HepG2 (cell line): ENCODE measurements at regions of chr17 and their contacts with region 1.

Region 1: GRCh38 chr17:42536048-42536371 is at the start of gene NAGLU:
- DNase-seq: peak; percentile 89
- ATAC-seq: peak; percentile 74
- H3K4me3 ChIP-seq: peak within 1 kb of the TSS; percentile 54 to 72 (median 66)
- H3K27ac ChIP-seq: peak within 1 kb of the TSS; percentile 79
- H3K4me1 ChIP-seq: peaks cover 62% of the 10 kb centered on the region
- H3K27me3 ChIP-seq: no peaks in the 10 kb centered on the region
- CTCF ChIP-seq: no peak
- EP300 ChIP-seq: peak in 1 of 2 experiments; percentile 32; a peak in 1 of 4 replicates
- POLR2A ChIP-seq: peak; percentile 55 to 86
- RAD21 ChIP-seq: no peak
- total RNA-seq, gene NAGLU: 13.1 and 40.1 TPM in 2 replicates

Region 2: GRCh38 chr17:42422958-42423712 is 112.9 kb before region 1 on chr17 and contains the start of gene CAVIN1:
- CTCF ChIA-PET with region 1: no interaction called
- POLR2A ChIA-PET with region 1: interaction called, 11 read pairs
- in situ Hi-C with region 1: no loop called
- intact Hi-C with region 1: no loop called
- DNase-seq: peak; percentile 90
- ATAC-seq: peak; percentile 84
- H3K4me3 ChIP-seq: peak within 1 kb of the TSS; percentile 78 to 95 (median 88)
- H3K27ac ChIP-seq: peak within 1 kb of the TSS; percentile 7
- H3K4me1 ChIP-seq: peaks cover 47% of the 10 kb centered on the region
- H3K27me3 ChIP-seq: no peaks in the 10 kb centered on the region; a peak in 1 of 5 replicates
- CTCF ChIP-seq: no peak; the same call in 1 of the 2 replicates
- EP300 ChIP-seq: 0 out of 4 replicates have a peak, but pooled peaks of 1 of the 2 experiments have one; percentile 28
- POLR2A ChIP-seq: peak; percentile 90 to 94
- RAD21 ChIP-seq: no peak
- total RNA-seq, gene CAVIN1: 25.5 and 26.0 TPM in 2 replicates

Region 3: DNA sequence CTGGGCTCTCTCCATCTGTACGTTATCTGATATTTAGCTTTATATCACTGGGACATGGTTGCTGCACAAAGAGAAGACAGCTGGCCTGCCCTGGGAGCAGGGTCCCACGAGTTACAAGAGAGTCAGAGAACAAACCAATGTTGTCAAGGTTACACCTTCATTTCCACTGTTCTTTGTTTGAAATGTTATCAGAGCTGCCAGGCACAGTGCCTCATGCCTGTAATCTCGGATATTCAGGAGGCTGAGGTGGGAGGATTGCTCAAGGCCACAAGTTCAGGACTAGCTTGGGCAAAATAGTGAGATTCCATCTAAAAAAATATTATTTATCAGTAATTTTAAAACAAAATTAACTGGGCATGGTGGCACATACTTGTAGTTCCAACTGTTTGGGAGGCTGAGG is 42.7 kb before region 1 on chr17:
- CTCF ChIA-PET with region 1: no interaction called
- POLR2A ChIA-PET with region 1: no interaction called
- in situ Hi-C with region 1: no loop called
- intact Hi-C with region 1: no loop called
- DNase-seq: peak; percentile 62
- ATAC-seq: peak; percentile 77
- H3K4me3 ChIP-seq: no peak overlapping the region
- H3K27ac ChIP-seq: peak overlapping the region; percentile 35
- H3K4me1 ChIP-seq: peaks cover 16% of the 10 kb centered on the region
- H3K27me3 ChIP-seq: no peaks in the 10 kb centered on the region; a peak in 1 of 5 replicates
- CTCF ChIP-seq: no peak
- EP300 ChIP-seq: no peak
- POLR2A ChIP-seq: no peak
- RAD21 ChIP-seq: no peak

Region 4: GRCh38 chr17:42548070-42548837 is 12.2 kb after region 1 on chr17:
- CTCF ChIA-PET with region 1: no interaction called
- POLR2A ChIA-PET with region 1: interaction called, 68 read pairs
- in situ Hi-C with region 1: no loop called
- intact Hi-C with region 1: no loop called
- DNase-seq: no peak
- ATAC-seq: no peak
- H3K4me3 ChIP-seq: no peak overlapping the region
- H3K27ac ChIP-seq: no peak overlapping the region
- H3K4me1 ChIP-seq: peaks cover 65% of the 10 kb centered on the region
- H3K27me3 ChIP-seq: no peaks in the 10 kb centered on the region
- CTCF ChIP-seq: peak; percentile 33
- EP300 ChIP-seq: no peak
- POLR2A ChIP-seq: no peak; a peak in 1 of 4 replicates
- RAD21 ChIP-seq: no peak

Region 5: GRCh38 chr17:42566883-42567573 is 31.0 kb after region 1 on chr17 and contains the start of gene MLX:
- CTCF ChIA-PET with region 1: no interaction called
- POLR2A ChIA-PET with region 1: interaction called, 35 read pairs
- in situ Hi-C with region 1: no loop called
- intact Hi-C with region 1: no loop called
- DNase-seq: peak; percentile 91
- ATAC-seq: peak; percentile 64
- H3K4me3 ChIP-seq: peak within 1 kb of the TSS; percentile 67 to 93 (median 91)
- H3K27ac ChIP-seq: peak within 1 kb of the TSS; percentile 91
- H3K4me1 ChIP-seq: peaks cover 72% of the 10 kb centered on the region
- H3K27me3 ChIP-seq: no peaks in the 10 kb centered on the region; a peak in 1 of 5 replicates
- CTCF ChIP-seq: peak; percentile 48
- EP300 ChIP-seq: no peak; a peak in 2 of 4 replicates
- POLR2A ChIP-seq: peak in 1 of 2 experiments; percentile 60; a peak in 2 of 4 replicates
- RAD21 ChIP-seq: peak; percentile 44
- total RNA-seq, gene MLX: 38.9 and 40.2 TPM in 2 replicates

Region 6: GRCh38 chr17:42598905-42599304 is 62.9 kb after region 1 on chr17:
- CTCF ChIA-PET with region 1: no interaction called
- POLR2A ChIA-PET with region 1: no interaction called
- in situ Hi-C with region 1: no loop called
- intact Hi-C with region 1: no loop called
- DNase-seq: no peak
- ATAC-seq: no peak
- H3K4me3 ChIP-seq: no peak overlapping the region
- H3K27ac ChIP-seq: no peak overlapping the region
- H3K4me1 ChIP-seq: no peaks in the 10 kb centered on the region
- H3K27me3 ChIP-seq: no peaks in the 10 kb centered on the region
- CTCF ChIP-seq: no peak
- EP300 ChIP-seq: no peak
- POLR2A ChIP-seq: no peak
- RAD21 ChIP-seq: no peak

Region 7: GRCh38 chr17:42609182-42609813 is 73.3 kb after region 1 on chr17 and contains the starts of genes RETREG3 and TUBG1:
- CTCF ChIA-PET with region 1: no interaction called
- POLR2A ChIA-PET with region 1: interaction called, 21 read pairs
- in situ Hi-C with region 1: no loop called
- intact Hi-C with region 1: no loop called
- DNase-seq: peak; percentile 99
- ATAC-seq: peak; percentile 89
- H3K4me3 ChIP-seq: peak within 1 kb of the TSS; percentile 75 to 94 (median 91)
- H3K27ac ChIP-seq: peak within 1 kb of the TSS; percentile 89
- H3K4me1 ChIP-seq: peaks cover 59% of the 10 kb centered on the region
- H3K27me3 ChIP-seq: no peaks in the 10 kb centered on the region; a peak in 1 of 5 replicates
- CTCF ChIP-seq: peak; percentile 45
- EP300 ChIP-seq: no peak
- POLR2A ChIP-seq: peak; percentile 93 to 95
- RAD21 ChIP-seq: peak; percentile 81
- total RNA-seq, gene RETREG3: 38.2 and 55.8 TPM in 2 replicates
- total RNA-seq, gene TUBG1: 137 TPM in 2 replicates